ENCODE measurements at regions of chr5 and their contacts with region 1.

Region 1: GRCh38 chr5:14650052-14650451 is 14.5 kb upstream of the OTULIN start:
- DNase-seq: no peak
- H3K4me3 Mint-ChIP-seq: no peak overlapping the region
- H3K27ac Mint-ChIP-seq: no peak overlapping the region
- H3K4me1 Mint-ChIP-seq: no peaks in the 10 kb centered on the region
- H3K27me3 Mint-ChIP-seq: peaks cover 9% of the 10 kb centered on the region

Region 2: DNA sequence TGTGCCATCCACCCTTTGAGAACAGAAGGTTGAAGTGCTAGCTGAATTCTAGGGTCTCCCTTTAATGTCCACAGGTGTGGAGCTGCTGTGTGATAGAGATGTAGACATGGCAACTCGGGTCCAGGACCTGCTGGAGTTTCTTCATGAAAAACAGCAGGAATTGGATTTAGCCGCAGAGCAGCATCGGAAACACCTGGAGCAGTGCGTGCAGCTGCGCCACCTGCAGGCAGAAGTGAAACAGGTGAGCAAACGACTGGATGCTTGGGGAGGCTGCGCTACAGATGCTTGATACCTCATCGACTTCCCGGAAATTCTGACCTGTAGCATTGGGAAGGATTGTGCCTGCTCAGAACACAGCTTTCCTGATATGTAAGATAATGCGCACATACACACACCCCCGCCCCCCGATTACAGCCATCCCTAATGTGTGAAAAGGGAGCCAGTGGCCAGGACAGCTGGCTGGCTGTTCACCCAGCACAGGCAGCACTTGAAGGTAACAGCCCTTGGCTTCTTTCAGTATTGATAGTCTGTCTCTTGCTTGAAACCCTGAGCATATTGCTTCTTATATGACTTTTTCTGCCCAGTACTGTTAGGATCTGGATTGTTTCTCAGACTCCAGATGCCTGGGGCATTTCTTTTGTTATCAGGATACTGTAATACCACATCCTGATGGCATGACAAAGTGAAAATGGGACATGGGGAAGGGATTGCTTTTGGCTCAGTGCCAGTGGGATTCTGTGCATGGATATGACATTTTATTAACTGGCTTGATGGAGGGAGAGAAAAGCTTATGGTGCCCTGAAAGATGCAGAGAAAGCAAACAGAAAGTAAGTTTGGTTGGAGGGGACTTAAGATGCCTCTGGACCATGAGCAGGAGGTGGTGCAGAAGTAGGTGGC is 285.2 kb before region 1 on chr5:
- CTCF ChIA-PET with region 1: interaction called, 138 read pairs
- POLR2A ChIA-PET with region 1: no interaction called
- intact Hi-C with region 1: loop called (anchors 1 kb)
- DNase-seq: peak; percentile 19
- H3K4me3 Mint-ChIP-seq: no peak overlapping the region
- H3K27ac Mint-ChIP-seq: no peak overlapping the region
- H3K4me1 Mint-ChIP-seq: peaks cover 18% of the 10 kb centered on the region
- H3K27me3 Mint-ChIP-seq: no peaks in the 10 kb centered on the region

Region 3: DNA sequence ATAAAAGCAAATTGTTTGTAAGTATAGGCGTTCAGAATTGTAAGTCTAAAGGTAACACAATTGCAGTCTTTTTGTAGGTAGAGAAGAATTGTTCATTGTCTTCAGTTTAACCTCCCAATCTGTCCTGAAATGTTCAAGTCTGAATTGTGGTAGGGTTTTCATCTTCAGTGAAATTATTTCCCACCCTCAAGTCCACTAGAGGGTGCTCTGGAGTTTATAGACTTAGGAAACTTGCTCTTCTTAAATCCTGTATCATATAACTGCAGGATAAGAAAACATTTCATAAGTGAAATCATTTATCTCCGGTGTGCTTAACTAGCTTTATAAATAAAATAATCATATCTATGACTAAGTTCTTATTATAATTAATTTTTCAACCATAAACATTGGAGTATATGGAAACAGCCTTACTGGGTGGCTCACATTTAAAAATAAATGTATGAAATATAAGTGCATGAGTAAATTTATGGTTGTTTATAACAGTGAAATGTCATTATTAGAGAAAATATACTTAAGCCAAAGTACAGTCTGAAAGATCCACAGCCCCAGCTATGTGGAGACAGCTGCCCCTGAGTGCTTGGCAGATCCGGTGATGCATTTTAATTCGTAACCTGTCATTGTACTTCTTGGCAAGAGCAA is 250.9 kb before region 1 on chr5:
- CTCF ChIA-PET with region 1: interaction called, 80 read pairs
- POLR2A ChIA-PET with region 1: interaction called, 3 read pairs
- intact Hi-C with region 1: loop called (anchors 1 kb)
- DNase-seq: no peak
- H3K4me3 Mint-ChIP-seq: no peak overlapping the region
- H3K27ac Mint-ChIP-seq: no peak overlapping the region
- H3K4me1 Mint-ChIP-seq: peaks cover 13% of the 10 kb centered on the region
- H3K27me3 Mint-ChIP-seq: no peaks in the 10 kb centered on the region

Measured in activated CD4-positive, alpha-beta memory T cell treated with anti-CD3 and anti-CD28 coated beads for 36 hours (primary cell).